ENCODE measurements at regions of chr11 and their contacts with region 1.

Region 1: GRCh38 chr11:88117281-88117858 is 57.9 kb downstream of the RAB38 start:
- DNase-seq: no peak
- ATAC-seq: no peak
- H3K4me3 Mint-ChIP-seq: no peak overlapping the region
- H3K27ac Mint-ChIP-seq: no peak overlapping the region
- H3K4me1 Mint-ChIP-seq: no peaks in the 10 kb centered on the region
- H3K27me3 Mint-ChIP-seq: peaks cover 2% of the 10 kb centered on the region
- CTCF ChIP-seq: no peak

Region 2: DNA sequence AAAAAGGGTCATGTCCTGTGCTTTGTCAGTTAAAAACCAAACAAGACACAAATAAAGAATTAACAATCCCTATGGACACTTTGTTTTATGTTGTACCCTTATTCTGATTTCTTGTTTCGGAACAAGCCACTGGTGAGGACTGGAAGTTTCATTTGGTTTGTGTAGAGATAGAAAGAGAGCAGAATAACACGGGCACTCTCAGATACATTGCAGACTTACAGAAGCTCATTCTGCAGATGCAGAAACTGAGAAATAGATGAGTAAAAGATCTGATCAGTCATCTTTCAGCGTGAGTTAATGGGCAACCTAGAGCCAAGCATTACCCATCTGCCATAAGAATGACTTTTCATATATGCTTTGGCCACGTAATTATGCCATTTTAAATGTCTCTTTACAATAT is 349.8 kb before region 1 on chr11:
- CTCF ChIA-PET with region 1: no interaction called
- POLR2A ChIA-PET with region 1: no interaction called
- intact Hi-C with region 1: no loop called
- DNase-seq: no peak
- ATAC-seq: no peak
- H3K4me3 Mint-ChIP-seq: no peak overlapping the region
- H3K27ac Mint-ChIP-seq: no peak overlapping the region
- H3K4me1 Mint-ChIP-seq: no peaks in the 10 kb centered on the region
- H3K27me3 Mint-ChIP-seq: no peaks in the 10 kb centered on the region
- CTCF ChIP-seq: no peak

Region 3: GRCh38 chr11:88068837-88069554 is 48.4 kb before region 1 on chr11:
- CTCF ChIA-PET with region 1: no interaction called
- POLR2A ChIA-PET with region 1: no interaction called
- intact Hi-C with region 1: no loop called
- DNase-seq: no peak
- ATAC-seq: no peak
- H3K4me3 Mint-ChIP-seq: no peak overlapping the region
- H3K27ac Mint-ChIP-seq: no peak overlapping the region
- H3K4me1 Mint-ChIP-seq: no peaks in the 10 kb centered on the region
- H3K27me3 Mint-ChIP-seq: no peaks in the 10 kb centered on the region
- CTCF ChIP-seq: no peak

Region 4: DNA sequence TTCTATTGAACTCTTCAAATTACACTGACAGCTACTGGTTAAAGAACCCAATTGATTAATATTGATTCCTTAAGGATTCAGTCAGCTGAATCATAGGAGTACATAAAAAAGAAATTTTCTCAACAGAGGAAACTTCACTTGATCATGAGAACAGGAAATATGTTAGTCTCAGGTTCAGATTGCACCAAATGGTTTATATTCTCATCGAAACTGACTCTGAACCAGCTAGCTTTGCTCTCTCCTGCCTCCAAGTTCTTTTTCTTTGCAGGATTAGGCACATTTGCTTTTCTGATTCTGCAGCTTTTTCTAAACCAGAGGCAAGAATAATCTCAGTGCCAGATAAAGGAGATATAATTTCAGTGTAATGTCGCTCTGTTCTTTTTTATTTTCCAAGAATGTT is 253.4 kb after region 1 on chr11:
- CTCF ChIA-PET with region 1: no interaction called
- POLR2A ChIA-PET with region 1: interaction called, 10 read pairs
- intact Hi-C with region 1: no loop called
- DNase-seq: no peak
- ATAC-seq: no peak
- H3K4me3 Mint-ChIP-seq: no peak overlapping the region
- H3K27ac Mint-ChIP-seq: no peak overlapping the region
- H3K4me1 Mint-ChIP-seq: no peaks in the 10 kb centered on the region
- H3K27me3 Mint-ChIP-seq: peaks cover 1% of the 10 kb centered on the region
- CTCF ChIP-seq: no peak